RWPE1 (cell line): ENCODE measurements at regions of chr10 and their contacts with region 1.

Region 1: DNA sequence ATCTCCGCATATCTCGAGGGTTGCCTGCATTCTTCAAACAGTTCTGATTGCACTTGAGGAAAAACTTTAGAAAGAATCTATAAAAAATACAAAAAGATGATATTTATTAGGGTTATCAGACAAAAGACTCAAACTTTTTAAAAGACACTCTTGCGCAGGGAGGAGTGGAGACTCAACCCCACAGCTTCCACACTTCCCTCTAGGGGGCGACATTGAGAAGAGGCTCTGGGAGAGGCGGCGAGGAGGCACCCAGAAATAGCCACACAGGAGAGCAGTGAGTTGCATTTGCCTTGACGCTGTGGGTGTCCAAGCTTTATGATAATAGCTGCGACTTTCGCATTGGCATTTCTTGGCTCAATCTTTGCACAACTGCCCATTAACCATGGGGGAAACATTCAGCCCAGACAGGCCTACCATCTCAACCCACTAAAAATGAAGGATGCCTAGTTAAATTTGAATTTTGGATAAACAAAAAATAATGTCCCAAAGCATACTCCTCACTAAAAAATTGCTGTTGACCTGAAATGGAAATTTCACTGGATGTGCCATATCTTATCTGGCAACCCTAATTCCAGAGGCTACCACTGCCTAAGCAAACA is 86.2 kb downstream of the EBF3 start:
- DNase-seq: peak; percentile 24
- H3K27ac ChIP-seq: no peak overlapping the region
- CTCF ChIP-seq: no peak

Region 2: DNA sequence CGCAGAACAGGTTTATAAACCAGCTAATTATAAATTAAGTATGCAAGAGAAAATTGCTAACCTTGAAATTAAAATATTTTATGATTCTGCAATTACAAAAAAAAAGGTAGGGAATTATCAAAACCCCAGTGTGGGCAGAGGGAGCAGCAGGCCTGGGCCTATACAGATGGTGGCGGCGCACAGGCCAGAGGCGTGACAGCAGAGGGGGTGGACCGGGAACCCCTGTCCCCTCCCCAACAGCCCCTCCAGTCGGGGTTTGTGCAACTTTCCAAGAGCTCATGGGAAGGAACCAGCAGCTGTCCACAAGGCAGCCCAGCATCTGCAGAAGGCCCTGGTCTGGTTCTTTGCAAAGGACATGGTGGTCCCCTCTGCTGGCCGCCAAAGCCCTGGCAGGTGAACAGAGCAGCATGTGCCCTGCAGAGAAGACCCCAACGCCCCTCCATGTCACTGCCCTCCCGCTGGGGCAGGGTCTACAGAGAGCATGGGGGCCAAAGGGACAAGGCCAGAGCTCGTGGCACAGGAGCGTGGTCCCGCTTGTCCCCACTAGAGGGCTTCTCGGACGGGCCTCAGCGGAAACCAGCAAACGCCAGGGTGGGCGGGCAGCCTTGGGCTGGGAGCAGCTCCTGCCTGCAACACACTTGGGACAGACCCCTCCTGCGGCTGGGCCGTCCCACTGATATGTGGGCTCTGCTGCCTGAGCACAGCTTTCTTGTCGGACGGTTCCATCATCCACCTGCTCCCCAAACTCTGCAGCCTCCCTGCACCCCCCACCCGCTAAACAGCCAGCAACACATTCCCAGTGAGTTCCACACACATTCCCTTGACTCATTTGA is 11.1 kb after region 1 on chr10:
- CTCF ChIA-PET with region 1: interaction called, 10 read pairs
- POLR2A ChIA-PET with region 1: no interaction called
- DNase-seq: peak; percentile 51
- H3K27ac ChIP-seq: no peak overlapping the region
- CTCF ChIP-seq: peak; percentile 42